Panc1 (cell line): ENCODE measurements at regions of chr4 and their contacts with region 1.

Region 1: GRCh38 chr4:83034630-83035494 is at the start of gene COPS4:
- DNase-seq: peak; percentile 99
- ATAC-seq: peak; percentile 99
- H3K4me3 ChIP-seq: peak within 1 kb of the TSS; percentile 86 to 91
- H3K27ac ChIP-seq: peak within 1 kb of the TSS; percentile 93
- H3K4me1 ChIP-seq: peaks cover 16% of the 10 kb centered on the region
- H3K27me3 ChIP-seq: no peaks in the 10 kb centered on the region
- CTCF ChIP-seq: no peak
- total RNA-seq, gene COPS4: 23.7 TPM

Region 2: GRCh38 chr4:82968972-82969371 is 65.9 kb before region 1 on chr4:
- CTCF ChIA-PET with region 1: no interaction called
- POLR2A ChIA-PET with region 1: no interaction called
- in situ Hi-C with region 1: no loop called
- intact Hi-C with region 1: no loop called
- DNase-seq: no peak
- ATAC-seq: no peak
- H3K4me3 ChIP-seq: no peak overlapping the region
- H3K27ac ChIP-seq: no peak overlapping the region
- H3K4me1 ChIP-seq: no peaks in the 10 kb centered on the region
- H3K27me3 ChIP-seq: no peaks in the 10 kb centered on the region
- CTCF ChIP-seq: no peak

Region 3: DNA sequence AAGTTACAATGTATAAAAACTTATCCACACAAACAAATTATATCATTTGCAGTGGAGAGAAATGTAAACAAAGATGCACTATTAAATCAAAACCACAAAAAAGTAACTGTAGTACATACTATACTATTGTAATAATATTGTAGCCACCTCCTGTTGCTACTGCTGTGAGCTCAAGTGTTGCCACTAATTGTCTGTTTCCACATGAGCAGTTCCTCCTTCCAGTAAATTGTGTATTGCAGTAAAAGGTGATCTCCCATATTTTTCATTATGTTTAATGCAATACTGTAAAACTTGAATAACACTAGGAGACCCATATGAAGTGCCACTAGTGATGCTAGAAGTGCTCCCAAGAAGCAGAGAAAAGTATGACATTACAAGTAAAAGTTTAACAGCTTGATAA is 36.0 kb before region 1 on chr4:
- CTCF ChIA-PET with region 1: interaction called, 3 read pairs
- POLR2A ChIA-PET with region 1: interaction called, 11 read pairs
- in situ Hi-C with region 1: no loop called
- intact Hi-C with region 1: no loop called
- DNase-seq: no peak
- ATAC-seq: no peak
- H3K4me3 ChIP-seq: no peak overlapping the region
- H3K27ac ChIP-seq: no peak overlapping the region
- H3K4me1 ChIP-seq: no peaks in the 10 kb centered on the region; the same call in 1 of the 2 replicates
- H3K27me3 ChIP-seq: no peaks in the 10 kb centered on the region
- CTCF ChIP-seq: no peak

Region 4: GRCh38 chr4:83012687-83013419 is 22.0 kb before region 1 on chr4:
- CTCF ChIA-PET with region 1: interaction called, 14 read pairs
- POLR2A ChIA-PET with region 1: interaction called, 8 read pairs
- in situ Hi-C with region 1: no loop called
- intact Hi-C with region 1: no loop called
- DNase-seq: peak; percentile 91
- ATAC-seq: peak; percentile 93
- H3K4me3 ChIP-seq: peak overlapping the region; percentile 76 to 80
- H3K27ac ChIP-seq: peak overlapping the region; percentile 96
- H3K4me1 ChIP-seq: peaks cover 9% of the 10 kb centered on the region; the same call in 1 of the 2 replicates
- H3K27me3 ChIP-seq: no peaks in the 10 kb centered on the region
- CTCF ChIP-seq: peak; percentile 58

Region 5: DNA sequence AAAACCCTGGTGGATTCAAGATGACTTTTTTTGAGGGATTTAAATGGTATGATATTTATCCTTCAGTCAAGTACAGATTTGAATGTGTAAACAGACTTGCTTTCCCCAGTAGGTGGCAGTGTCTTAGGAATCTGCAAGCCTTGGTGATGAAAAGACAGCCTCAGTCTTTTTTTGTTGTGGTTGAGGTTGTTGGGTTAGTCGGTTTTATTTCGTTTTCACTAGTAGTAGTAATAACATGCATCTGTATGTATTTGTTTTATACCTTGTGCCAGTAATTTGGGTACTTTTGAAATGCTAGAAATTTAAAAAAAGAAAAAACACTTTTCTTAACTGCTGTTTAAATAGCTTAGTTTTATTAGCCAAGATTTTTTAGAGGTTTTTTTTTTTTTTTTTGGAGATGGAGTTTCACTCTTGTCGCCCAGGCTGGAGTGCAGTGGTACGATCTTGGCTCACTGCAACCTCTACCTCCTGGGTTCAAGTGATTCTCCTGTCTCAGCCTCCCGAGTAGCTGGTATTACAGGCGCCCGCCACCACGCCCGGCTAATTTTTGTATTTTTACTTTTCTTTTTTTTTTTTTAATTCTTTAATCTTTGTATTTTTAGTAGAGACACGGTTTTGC is 39.3 kb after region 1 on chr4:
- CTCF ChIA-PET with region 1: no interaction called
- POLR2A ChIA-PET with region 1: interaction called, 13 read pairs
- in situ Hi-C with region 1: no loop called
- intact Hi-C with region 1: no loop called
- DNase-seq: peak; percentile 35
- ATAC-seq: peak; percentile 80
- H3K4me3 ChIP-seq: no peak overlapping the region
- H3K27ac ChIP-seq: no peak overlapping the region; the same call in 1 of the 2 replicates
- H3K4me1 ChIP-seq: no peaks in the 10 kb centered on the region; the same call in 1 of the 2 replicates
- H3K27me3 ChIP-seq: no peaks in the 10 kb centered on the region
- CTCF ChIP-seq: peak; percentile 69; the same call in 1 of the 2 replicates

Region 6: DNA sequence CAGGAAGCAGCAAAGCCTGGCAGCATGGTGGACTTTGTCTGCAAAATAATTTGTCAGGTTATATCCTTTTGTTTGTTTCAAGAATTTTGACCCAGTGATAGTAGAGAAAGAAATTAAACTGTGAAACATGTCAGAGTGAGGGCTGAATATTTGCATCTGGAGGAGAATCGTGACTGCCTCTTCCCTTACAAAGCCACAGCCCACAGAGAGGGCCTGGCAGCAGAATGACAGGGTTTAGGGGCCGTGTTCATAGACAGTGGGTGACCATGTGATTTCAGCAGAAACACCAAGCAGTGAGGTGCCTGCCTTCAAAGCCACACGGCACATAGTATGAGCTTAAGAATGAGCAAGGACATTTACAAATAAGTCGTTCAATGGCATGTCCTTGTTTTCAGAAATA is 104.1 kb after region 1 on chr4:
- CTCF ChIA-PET with region 1: no interaction called
- POLR2A ChIA-PET with region 1: no interaction called
- in situ Hi-C with region 1: no loop called
- intact Hi-C with region 1: no loop called
- DNase-seq: no peak
- ATAC-seq: no peak
- H3K4me3 ChIP-seq: no peak overlapping the region
- H3K27ac ChIP-seq: no peak overlapping the region
- H3K4me1 ChIP-seq: no peaks in the 10 kb centered on the region
- H3K27me3 ChIP-seq: no peaks in the 10 kb centered on the region
- CTCF ChIP-seq: no peak

Region 7: GRCh38 chr4:83356899-83357661 is 322.2 kb after region 1 on chr4:
- CTCF ChIA-PET with region 1: no interaction called
- POLR2A ChIA-PET with region 1: interaction called, 12 read pairs
- in situ Hi-C with region 1: no loop called
- intact Hi-C with region 1: no loop called
- DNase-seq: peak; percentile 76
- ATAC-seq: peak; percentile 93
- H3K4me3 ChIP-seq: no peak overlapping the region
- H3K27ac ChIP-seq: peak overlapping the region; percentile 61
- H3K4me1 ChIP-seq: peaks cover 19% of the 10 kb centered on the region
- H3K27me3 ChIP-seq: no peaks in the 10 kb centered on the region
- CTCF ChIP-seq: no peak

Region 8: DNA sequence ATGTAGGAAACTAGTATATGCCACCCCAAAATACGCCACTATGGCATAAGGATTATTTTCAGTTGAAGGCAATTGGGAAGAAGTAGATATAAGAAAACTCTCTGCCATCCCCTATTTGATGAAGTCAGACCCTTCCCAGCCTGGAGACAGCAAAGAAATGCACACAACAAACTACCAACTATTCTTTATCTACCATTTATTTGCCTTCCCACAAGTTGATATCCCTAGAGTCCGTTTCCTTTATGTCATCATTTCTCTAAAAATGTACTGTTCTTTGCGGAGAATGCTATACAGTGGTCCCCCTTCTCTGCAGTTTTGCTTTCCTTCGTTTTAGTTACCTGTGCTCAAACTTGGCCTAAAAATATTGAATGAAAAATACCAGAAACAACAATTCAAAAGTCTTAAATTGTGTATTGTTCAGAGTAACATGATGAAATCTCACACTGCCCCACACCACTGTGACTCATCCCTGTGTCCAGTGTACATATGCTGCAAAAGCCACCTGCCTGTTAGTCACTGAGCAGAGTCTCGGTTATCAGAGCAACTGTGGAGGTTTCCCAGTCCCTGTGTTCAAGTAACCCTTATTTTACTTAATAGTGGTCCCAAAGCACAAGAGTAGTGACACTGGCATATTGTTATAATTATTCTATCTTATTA is 1779.4 kb after region 1 on chr4:
- CTCF ChIA-PET with region 1: no interaction called
- POLR2A ChIA-PET with region 1: interaction called, 19 read pairs
- in situ Hi-C with region 1: no loop called
- intact Hi-C with region 1: no loop called
- DNase-seq: peak; percentile 73
- ATAC-seq: peak; percentile 74; the same call in 1 of the 2 replicates
- H3K4me3 ChIP-seq: no peak overlapping the region
- H3K27ac ChIP-seq: no peak overlapping the region
- H3K4me1 ChIP-seq: no peaks in the 10 kb centered on the region
- H3K27me3 ChIP-seq: no peaks in the 10 kb centered on the region
- CTCF ChIP-seq: no peak